Heart left ventricle (tissue), 16 donors: ENCODE measurements at regions of chr12 and their contacts with region 1.

Region 1: DNA sequence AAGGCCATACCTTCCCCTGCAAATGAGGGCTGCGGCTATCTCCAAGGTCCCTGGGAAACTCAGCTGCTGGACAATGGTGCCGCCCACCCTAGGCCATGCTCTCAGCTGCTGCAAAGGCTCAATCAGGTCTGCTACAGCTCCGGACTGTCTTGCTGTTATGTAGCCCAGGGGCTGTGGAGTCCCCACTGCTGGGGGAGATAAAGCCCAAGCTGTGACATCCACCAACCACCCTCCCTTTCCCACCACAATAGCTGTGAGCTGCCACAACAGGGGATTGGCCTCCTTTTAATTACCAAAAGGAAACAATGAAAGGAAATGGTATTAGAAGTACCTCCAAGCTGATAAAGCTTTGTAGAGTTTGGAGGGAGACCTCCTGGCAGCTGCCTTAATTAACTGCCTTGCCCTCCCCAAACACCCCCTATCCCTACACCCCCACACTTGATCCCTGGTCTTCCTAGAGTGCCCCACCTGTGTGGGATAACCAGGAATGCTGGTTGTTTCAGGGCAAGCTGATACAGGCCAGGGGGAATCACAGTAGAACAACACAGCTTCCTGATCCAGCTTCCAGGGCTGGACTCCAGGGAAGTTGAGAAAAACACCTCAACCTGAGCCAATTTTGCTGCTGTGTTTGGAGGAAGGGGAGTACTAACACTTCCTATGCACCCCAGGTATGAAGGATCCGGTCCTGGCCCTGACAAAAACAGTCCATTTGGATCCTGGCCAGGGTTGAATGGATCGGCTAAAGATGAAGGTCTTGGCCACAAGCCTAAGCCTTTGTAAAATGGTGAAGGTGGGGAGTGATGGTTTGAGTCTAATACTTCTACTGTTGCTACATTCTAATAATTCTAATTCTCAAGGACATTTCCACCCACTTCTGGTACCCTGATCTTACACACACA is at the start of gene VWF:
- DNase-seq: peak in 2 of 5 donors; percentile 66 to 75
- ATAC-seq: peak; percentile 67 to 82 (median 73)
- H3K4me3 ChIP-seq: peak within 1 kb of the TSS; percentile 43 to 68 (median 58)
- H3K27ac ChIP-seq: peak within 1 kb of the TSS; percentile 72 to 95 (median 85)
- H3K4me1 ChIP-seq: peaks cover 0 to 21% (median 3%) of the 10 kb centered on the region in 12 donors
- H3K27me3 ChIP-seq: no peaks in the 10 kb centered on the region
- CTCF ChIP-seq: no peak
- POLR2A ChIP-seq: peak in 1 of 2 donors; percentile 55
- total RNA-seq, gene VWF: 187 to 503 (median 258) TPM

Region 2: DNA sequence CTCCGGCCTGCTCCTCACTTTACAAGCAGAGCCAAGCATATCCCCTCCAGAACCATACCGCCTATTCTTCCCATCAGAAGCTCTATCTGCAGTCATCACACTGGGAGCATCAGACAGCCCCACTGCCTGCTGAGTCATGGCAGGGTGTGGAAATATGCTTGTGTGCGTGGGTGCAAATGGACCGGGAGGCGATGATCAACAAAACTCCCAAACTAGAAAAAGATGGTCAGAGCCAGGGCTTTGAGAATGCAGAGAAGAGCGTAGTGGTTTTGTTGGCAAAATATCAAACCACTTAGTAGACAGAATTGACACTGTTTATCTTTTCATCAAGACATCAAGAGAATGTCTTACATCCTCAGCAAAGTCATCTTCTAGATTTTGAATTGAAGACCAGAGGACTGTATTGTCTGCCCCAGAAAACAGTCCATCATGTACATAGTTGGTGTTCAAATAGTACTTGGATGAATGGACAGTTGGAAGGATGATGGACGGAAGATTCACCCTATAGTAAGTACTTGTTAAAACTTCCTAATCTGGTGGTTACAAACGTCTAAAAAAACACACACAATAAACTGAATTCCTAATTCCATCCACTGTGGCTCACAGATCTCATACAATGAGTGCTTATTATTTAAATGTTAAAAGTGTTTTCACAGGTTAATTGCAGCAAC is 55.1 kb before region 1 on chr12:
- intact Hi-C with region 1: loop called in 2 of 10 experiments (anchors 5 kb)
- DNase-seq: peak in 1 of 5 donors; percentile 52
- ATAC-seq: peak in 2 of 4 donors; percentile 36 to 61
- H3K4me3 ChIP-seq: no peak overlapping the region
- H3K27ac ChIP-seq: peak overlapping the region in 8 of 12 donors; percentile 18 to 87 (median 30)
- H3K4me1 ChIP-seq: peaks cover under 1 to 52% (median 20%) of the 10 kb centered on the region in 12 donors
- H3K27me3 ChIP-seq: no peaks in the 10 kb centered on the region
- CTCF ChIP-seq: no peak
- POLR2A ChIP-seq: no peak

Region 3: DNA sequence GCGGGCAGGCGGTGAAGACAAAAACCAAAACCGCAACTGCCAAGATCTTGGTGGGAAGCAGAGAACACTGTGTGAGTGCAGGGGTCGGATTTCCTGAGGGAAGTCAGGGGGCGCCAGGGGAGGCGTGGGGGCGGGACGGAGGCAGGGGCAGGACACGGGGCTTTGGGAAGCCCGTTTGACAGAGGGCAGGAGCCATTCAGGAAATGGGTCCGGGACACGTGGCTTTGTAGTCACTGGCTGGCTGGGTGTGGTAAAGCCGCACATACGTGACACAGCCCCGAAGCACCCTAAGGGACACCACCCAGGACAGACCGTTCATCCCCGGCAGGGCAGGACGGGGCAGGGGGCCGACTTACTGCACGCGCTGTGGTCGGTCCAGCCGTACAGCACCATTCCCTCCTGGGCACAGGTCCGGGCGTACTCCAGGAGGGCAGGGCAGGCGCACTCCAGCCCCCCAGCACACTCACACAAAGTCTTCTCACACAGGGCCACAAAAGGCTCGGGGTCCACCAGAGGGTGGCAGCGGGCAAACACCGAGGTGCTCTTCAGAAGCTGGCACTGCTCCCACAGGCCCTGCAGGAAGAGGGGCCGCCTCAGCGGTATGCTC is 49.6 kb before region 1 on chr12:
- intact Hi-C with region 1: loop called in 6 of 10 experiments (anchors 5 kb)
- DNase-seq: peak in 4 of 5 donors; percentile 51 to 74 (median 58)
- ATAC-seq: peak; percentile 15 to 65 (median 60)
- H3K4me3 ChIP-seq: peak overlapping the region in 9 of 12 donors; percentile 10 to 44 (median 34)
- H3K27ac ChIP-seq: peak overlapping the region; percentile 53 to 87 (median 71)
- H3K4me1 ChIP-seq: peaks cover 11 to 79% (median 44%) of the 10 kb centered on the region in 12 donors
- H3K27me3 ChIP-seq: peaks cover 0 to 11% (median 0%) of the 10 kb centered on the region in 9 donors
- CTCF ChIP-seq: no peak
- POLR2A ChIP-seq: no peak

Region 4: GRCh38 chr12:6154730-6155459 is 30.2 kb after region 1 on chr12:
- intact Hi-C with region 1: loop called in 3 of 10 experiments (anchors 1 to 2 kb)
- DNase-seq: peak; percentile 84 to 89 (median 87)
- ATAC-seq: peak; percentile 88 to 96 (median 94)
- H3K4me3 ChIP-seq: no peak overlapping the region
- H3K27ac ChIP-seq: peak overlapping the region; percentile 45 to 87 (median 78)
- H3K4me1 ChIP-seq: peaks cover 0 to 31% (median 6%) of the 10 kb centered on the region in 12 donors
- H3K27me3 ChIP-seq: peaks cover 0 to 4% (median 0%) of the 10 kb centered on the region in 9 donors
- CTCF ChIP-seq: no peak
- POLR2A ChIP-seq: no peak

Region 5: DNA sequence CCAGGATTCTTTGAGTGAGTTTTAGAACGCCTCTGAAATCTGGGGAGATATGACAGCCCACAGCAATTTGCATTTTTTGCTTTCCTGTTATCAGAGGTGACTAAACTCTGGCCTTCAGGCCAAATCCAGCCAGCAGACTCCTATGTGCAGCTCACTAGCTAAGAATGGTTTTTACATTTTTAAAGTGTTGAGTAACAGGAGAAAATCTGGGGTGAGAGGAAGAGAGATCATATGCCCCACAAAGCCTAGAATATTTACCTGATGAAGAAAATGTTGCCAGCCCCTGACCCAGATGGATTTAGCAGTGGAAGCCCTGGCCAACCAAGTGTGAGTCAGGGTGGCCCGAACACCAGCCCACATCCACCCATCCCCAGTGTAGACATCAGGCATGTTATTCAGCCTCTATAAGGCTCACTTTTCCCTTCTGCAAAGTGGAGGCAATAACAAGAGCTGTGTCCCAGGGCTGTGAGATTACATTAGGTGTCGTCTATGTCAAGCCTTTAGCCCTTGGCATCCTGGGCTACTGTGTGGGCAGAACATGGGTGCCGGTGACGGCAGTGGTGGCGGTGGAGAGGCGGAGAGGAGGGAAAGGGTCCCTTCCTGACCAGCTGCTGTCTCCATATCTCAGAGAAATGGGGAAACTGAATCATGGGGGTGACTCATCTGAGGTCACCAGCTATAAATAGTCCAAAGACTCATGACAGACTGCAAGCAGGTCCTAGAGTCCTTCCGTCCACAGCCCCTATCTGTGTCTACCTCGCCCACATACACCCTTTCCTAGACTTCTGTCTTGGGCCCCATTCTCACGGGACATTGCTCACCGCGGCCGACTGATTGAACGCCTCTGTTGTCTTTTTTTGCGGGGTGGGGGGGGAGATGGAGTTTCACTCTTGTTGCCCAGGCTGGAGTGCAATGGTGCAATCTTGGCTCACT is 42.9 kb after region 1 on chr12:
- intact Hi-C with region 1: loop called in 3 of 10 experiments (anchors 2 to 5 kb)
- DNase-seq: peak in 4 of 5 donors; percentile 42 to 88 (median 72)
- ATAC-seq: peak; percentile 63 to 90 (median 84)
- H3K4me3 ChIP-seq: peak overlapping the region in 1 of 12 donors; percentile 12
- H3K27ac ChIP-seq: peak overlapping the region; percentile 18 to 96 (median 74)
- H3K4me1 ChIP-seq: peaks cover 4 to 47% (median 24%) of the 10 kb centered on the region in 12 donors
- H3K27me3 ChIP-seq: no peaks in the 10 kb centered on the region
- CTCF ChIP-seq: no peak
- POLR2A ChIP-seq: no peak